HEK293 (cell line): ENCODE measurements at regions of chr9 and their contacts with region 1.

Region 1: GRCh38 chr9:36407122-36407723 is 7.2 kb upstream of the RNF38 start:
- H3K4me3 ChIP-seq: no peak overlapping the region
- H3K27ac ChIP-seq: no peak overlapping the region
- H3K4me1 ChIP-seq: no peaks in the 10 kb centered on the region
- CTCF ChIP-seq: peak; percentile 66

Region 2: GRCh38 chr9:36423206-36423605 is 16.0 kb after region 1 on chr9:
- CTCF ChIA-PET with region 1: interaction called, 67 read pairs
- POLR2A ChIA-PET with region 1: interaction called, 3 read pairs
- H3K4me3 ChIP-seq: no peak overlapping the region
- H3K27ac ChIP-seq: no peak overlapping the region
- H3K4me1 ChIP-seq: peaks cover 4% of the 10 kb centered on the region; the same call in 1 of the 2 replicates
- CTCF ChIP-seq: no peak

Region 3: DNA sequence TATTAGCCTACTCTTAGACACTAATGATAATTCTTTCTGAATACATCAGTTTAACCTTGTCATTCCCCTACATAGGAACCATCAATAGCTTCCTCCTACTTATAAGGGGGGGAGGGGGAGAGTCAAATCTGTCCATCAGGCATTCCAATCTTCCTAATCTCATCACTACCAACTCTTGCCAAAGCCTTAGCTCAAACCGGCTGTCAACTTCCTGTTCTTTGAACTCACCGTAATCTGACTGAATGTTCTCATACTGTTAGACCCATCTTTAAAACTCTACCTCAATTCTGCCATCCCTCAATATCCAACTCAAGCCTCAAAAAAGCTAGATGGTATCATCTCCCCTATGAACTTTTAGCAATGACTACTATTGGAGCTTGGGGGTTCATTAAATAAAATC is 34.7 kb after region 1 on chr9:
- CTCF ChIA-PET with region 1: interaction called, 275 read pairs
- POLR2A ChIA-PET with region 1: no interaction called
- H3K4me3 ChIP-seq: no peak overlapping the region
- H3K27ac ChIP-seq: no peak overlapping the region
- H3K4me1 ChIP-seq: no peaks in the 10 kb centered on the region
- CTCF ChIP-seq: no peak

Region 4: DNA sequence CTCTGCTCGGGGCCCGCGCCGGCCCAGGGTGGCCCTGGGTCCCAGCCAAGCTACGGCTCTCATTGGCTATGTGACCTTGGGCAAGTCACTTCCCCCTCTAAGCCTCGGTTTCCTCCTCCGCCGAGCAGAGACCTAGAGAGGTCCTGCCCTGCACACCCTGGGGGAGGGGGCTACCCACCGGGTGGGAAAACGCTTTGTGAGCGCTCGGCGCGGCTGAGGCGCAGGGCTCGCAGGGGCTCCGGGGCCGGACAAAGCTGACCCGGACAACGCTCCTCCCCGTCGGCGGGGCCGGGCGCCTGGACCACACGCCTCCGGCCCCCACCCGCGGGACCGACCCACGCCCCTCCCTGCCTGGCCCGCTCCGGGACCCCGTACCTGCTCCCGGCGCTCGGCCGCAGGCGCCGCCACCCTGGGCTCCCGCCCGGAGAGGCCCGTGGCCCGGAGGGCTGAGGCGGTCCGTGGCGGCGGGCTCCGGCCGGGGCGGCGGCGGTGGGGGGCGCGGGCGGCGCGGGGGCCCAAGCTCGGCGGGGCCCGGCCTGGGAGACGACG is 79.8 kb after region 1 on chr9:
- CTCF ChIA-PET with region 1: interaction called, 13 read pairs
- POLR2A ChIA-PET with region 1: interaction called, 3 read pairs
- H3K4me3 ChIP-seq: peak overlapping the region; percentile 91
- H3K27ac ChIP-seq: peak overlapping the region; percentile 46; the same call in 1 of the 2 replicates
- H3K4me1 ChIP-seq: peaks cover 8% of the 10 kb centered on the region
- CTCF ChIP-seq: no peak

Region 5: GRCh38 chr9:36560857-36561221 is 153.6 kb after region 1 on chr9:
- CTCF ChIA-PET with region 1: interaction called, 161 read pairs
- POLR2A ChIA-PET with region 1: no interaction called
- H3K4me3 ChIP-seq: no peak overlapping the region
- H3K27ac ChIP-seq: no peak overlapping the region
- H3K4me1 ChIP-seq: no peaks in the 10 kb centered on the region
- CTCF ChIP-seq: no peak

Region 6: DNA sequence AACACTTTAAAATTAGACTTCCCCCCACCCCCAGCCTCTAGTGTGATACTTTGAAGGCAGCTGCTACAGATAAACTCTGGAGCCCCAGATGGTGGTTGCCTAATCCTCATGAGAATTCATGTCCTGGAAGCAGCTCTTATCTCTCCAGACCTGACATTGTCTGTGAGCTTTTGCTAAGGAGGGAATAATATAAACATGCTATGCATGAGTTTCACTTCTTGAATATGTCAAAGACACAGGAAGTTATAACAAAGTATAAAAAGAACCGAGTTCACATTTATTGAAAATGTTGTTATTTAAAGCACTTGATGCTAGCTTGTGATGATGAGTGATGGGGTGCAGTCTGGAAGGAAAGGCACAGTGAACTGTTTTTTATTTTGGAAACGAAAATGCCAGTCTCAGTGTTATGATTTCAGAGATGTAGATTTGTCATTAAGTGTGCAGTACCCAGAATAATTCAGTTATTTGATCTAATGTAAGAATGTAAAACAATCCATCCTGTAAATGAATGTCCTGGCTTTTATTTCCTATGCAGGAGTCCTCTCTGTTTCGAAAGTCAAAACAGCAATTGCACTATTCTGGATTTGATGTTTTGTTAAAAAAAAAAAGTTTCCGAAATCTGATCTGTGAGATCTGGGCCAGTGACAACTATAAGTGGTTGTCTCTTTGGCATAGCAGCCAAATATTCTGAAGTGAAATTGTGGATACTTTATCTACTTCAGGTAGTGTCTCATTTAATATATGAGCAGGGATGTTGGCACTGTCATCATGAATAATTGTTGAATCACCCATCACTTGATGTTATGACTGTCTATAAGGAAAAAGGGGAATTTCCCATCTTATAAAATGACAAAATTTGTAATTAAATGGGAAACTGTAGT is 790.2 kb after region 1 on chr9:
- CTCF ChIA-PET with region 1: no interaction called
- POLR2A ChIA-PET with region 1: no interaction called
- H3K4me3 ChIP-seq: no peak overlapping the region
- H3K27ac ChIP-seq: no peak overlapping the region
- H3K4me1 ChIP-seq: peaks cover 10% of the 10 kb centered on the region; the same call in 1 of the 2 replicates
- CTCF ChIP-seq: no peak